IMR-90 (cell line): ENCODE measurements at regions of chr3 and their contacts with region 1.

Region 1: GRCh38 chr3:64548200-64548889 is 139.5 kb downstream of the ADAMTS9 start:
- DNase-seq: peak; percentile 73
- ATAC-seq: peak; percentile 91
- H3K4me3 ChIP-seq: no peak overlapping the region
- H3K27ac ChIP-seq: peak overlapping the region; percentile 99; the same call in 1 of the 2 replicates
- H3K4me1 ChIP-seq: peaks cover 12% of the 10 kb centered on the region; the same call in 1 of the 2 replicates
- H3K27me3 ChIP-seq: no peaks in the 10 kb centered on the region
- CTCF ChIP-seq: no peak
- POLR2A ChIP-seq: no peak
- RAD21 ChIP-seq: no peak

Region 2: GRCh38 chr3:64327100-64327804 is 221.1 kb before region 1 on chr3:
- CTCF ChIA-PET with region 1: no interaction called
- POLR2A ChIA-PET with region 1: no interaction called
- dilution Hi-C with region 1: no loop called
- in situ Hi-C with region 1: no loop called
- intact Hi-C with region 1: no loop called
- DNase-seq: no peak
- ATAC-seq: no peak
- H3K4me3 ChIP-seq: no peak overlapping the region
- H3K27ac ChIP-seq: no peak overlapping the region
- H3K4me1 ChIP-seq: peaks cover 5% of the 10 kb centered on the region
- H3K27me3 ChIP-seq: no peaks in the 10 kb centered on the region
- CTCF ChIP-seq: no peak
- POLR2A ChIP-seq: no peak
- RAD21 ChIP-seq: no peak

Region 3: GRCh38 chr3:64666171-64666588 is 117.8 kb after region 1 on chr3:
- CTCF ChIA-PET with region 1: no interaction called
- POLR2A ChIA-PET with region 1: no interaction called
- dilution Hi-C with region 1: no loop called
- in situ Hi-C with region 1: no loop called
- intact Hi-C with region 1: loop called (anchors 5 kb)
- DNase-seq: no peak
- ATAC-seq: peak; percentile 83
- H3K4me3 ChIP-seq: no peak overlapping the region
- H3K27ac ChIP-seq: peak overlapping the region; percentile 44; the same call in 1 of the 2 replicates
- H3K4me1 ChIP-seq: no peaks in the 10 kb centered on the region
- H3K27me3 ChIP-seq: no peaks in the 10 kb centered on the region
- CTCF ChIP-seq: no peak
- POLR2A ChIP-seq: no peak
- RAD21 ChIP-seq: no peak

Region 4: GRCh38 chr3:64863214-64864212 is 315.2 kb after region 1 on chr3:
- CTCF ChIA-PET with region 1: no interaction called
- POLR2A ChIA-PET with region 1: no interaction called
- dilution Hi-C with region 1: no loop called
- in situ Hi-C with region 1: no loop called
- intact Hi-C with region 1: no loop called
- DNase-seq: no peak
- ATAC-seq: no peak
- H3K4me3 ChIP-seq: no peak overlapping the region
- H3K27ac ChIP-seq: no peak overlapping the region
- H3K4me1 ChIP-seq: peaks cover 2% of the 10 kb centered on the region; the same call in 1 of the 2 replicates
- H3K27me3 ChIP-seq: no peaks in the 10 kb centered on the region
- CTCF ChIP-seq: no peak
- POLR2A ChIP-seq: no peak
- RAD21 ChIP-seq: no peak